Activated naive CD8-positive, alpha-beta T cell treated with anti-CD3 and anti-CD28 coated beads, Interleukin-2, amount 10 ng/mL, durations not matched to agents 7 days and 5 days (primary cell): ENCODE measurements at regions of chr14 and their contacts with region 1.

Region 1: GRCh38 chr14:91220581-91221274 is 23.8 kb downstream of the GPR68 start:
- DNase-seq: no peak
- ATAC-seq: no peak
- H3K4me3 Mint-ChIP-seq: no peak overlapping the region
- H3K27ac Mint-ChIP-seq: peak overlapping the region; percentile 57
- H3K4me1 Mint-ChIP-seq: peaks cover 44% of the 10 kb centered on the region
- H3K27me3 Mint-ChIP-seq: no peaks in the 10 kb centered on the region

Region 2: DNA sequence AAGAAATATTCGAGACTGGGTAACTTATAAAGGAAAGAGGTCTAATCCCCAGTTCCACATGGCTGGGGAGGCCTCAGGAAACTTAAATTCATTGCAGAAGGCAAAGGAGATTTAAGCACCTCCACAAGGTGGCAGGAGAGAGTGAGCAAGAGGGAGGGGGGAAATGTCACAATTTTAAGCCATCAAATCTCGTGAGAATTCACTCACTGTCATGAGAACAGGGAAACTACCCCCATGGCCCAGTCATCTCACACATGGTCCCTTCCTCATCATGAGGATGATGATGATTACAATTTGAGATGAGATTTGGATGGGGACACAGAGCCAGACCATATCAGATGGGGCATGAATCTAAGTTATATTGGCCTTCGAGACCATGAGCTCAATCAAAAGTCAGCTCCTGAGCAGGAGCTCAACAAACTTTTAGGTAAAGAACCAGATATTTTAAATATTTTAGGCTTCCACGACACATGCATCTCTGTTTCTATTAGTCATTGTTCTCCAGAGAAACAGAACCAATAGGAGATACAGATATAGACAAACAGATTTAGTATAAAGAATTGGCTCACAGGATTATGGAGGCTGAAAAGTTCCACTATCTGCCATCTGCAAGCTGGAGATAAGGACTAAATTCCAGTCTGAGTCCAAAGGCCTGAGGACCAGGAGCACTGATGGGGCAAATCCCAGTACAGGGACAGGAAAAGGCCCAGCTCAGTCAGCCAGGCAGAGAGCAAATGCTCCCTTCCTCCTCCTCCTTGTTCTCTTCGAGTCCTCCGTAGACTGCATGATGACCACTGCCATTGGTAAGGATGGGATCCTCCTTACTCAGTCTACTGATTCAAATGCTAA is 82.0 kb before region 1 on chr14:
- POLR2A ChIA-PET with region 1: no interaction called
- DNase-seq: no peak
- ATAC-seq: peak; percentile 28
- H3K4me3 Mint-ChIP-seq: no peak overlapping the region
- H3K27ac Mint-ChIP-seq: peak overlapping the region; percentile 35
- H3K4me1 Mint-ChIP-seq: peaks cover 47% of the 10 kb centered on the region
- H3K27me3 Mint-ChIP-seq: no peaks in the 10 kb centered on the region

Region 3: DNA sequence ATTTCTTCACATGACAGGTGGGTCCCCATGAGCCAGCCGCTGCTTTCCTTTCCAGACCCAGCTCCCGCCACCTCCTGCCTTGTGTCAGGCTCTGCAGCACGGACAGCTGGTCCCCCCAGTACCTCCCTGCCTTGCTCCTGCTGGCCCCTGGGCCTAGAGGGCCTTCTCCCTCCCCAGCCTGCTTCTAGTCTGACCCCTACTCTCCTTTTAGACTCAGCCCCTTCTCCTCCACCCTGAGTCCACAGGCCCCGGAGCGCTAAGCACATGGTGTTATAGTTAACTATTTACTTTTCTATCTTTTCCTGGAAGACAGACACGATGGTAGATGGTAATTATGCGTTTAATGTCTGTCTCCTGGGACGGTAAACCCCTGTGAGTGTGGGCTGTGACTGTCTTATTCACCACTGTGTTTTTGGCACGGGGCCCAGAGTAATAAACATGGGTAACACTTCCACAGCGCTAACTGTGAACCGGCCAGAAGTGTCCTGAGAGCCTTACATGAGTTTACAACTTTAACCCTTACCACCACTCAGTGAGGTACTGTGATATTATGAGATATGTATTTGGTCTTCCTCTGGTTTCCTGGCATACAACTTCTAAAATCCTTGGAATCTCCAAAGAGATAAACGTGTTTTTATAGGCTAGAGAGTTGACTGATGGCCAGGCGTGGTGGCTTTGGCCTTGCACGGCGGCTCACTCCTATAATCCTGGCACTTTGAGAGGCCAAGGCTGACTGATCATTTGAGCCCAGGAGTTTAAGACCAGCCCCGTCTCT is 65.7 kb before region 1 on chr14:
- POLR2A ChIA-PET with region 1: no interaction called
- DNase-seq: no peak
- ATAC-seq: peak; percentile 14
- H3K4me3 Mint-ChIP-seq: no peak overlapping the region
- H3K27ac Mint-ChIP-seq: peak overlapping the region; percentile 34
- H3K4me1 Mint-ChIP-seq: peaks cover 19% of the 10 kb centered on the region
- H3K27me3 Mint-ChIP-seq: no peaks in the 10 kb centered on the region

Region 4: GRCh38 chr14:91193069-91193468 is 27.7 kb before region 1 on chr14:
- POLR2A ChIA-PET with region 1: interaction called, 24 read pairs
- DNase-seq: no peak
- ATAC-seq: no peak
- H3K4me3 Mint-ChIP-seq: no peak overlapping the region
- H3K27ac Mint-ChIP-seq: no peak overlapping the region
- H3K4me1 Mint-ChIP-seq: peaks cover 36% of the 10 kb centered on the region
- H3K27me3 Mint-ChIP-seq: no peaks in the 10 kb centered on the region